Heart left ventricle (tissue), 16 donors: ENCODE measurements at regions of chr2 and their contacts with region 1.

Region 1: DNA sequence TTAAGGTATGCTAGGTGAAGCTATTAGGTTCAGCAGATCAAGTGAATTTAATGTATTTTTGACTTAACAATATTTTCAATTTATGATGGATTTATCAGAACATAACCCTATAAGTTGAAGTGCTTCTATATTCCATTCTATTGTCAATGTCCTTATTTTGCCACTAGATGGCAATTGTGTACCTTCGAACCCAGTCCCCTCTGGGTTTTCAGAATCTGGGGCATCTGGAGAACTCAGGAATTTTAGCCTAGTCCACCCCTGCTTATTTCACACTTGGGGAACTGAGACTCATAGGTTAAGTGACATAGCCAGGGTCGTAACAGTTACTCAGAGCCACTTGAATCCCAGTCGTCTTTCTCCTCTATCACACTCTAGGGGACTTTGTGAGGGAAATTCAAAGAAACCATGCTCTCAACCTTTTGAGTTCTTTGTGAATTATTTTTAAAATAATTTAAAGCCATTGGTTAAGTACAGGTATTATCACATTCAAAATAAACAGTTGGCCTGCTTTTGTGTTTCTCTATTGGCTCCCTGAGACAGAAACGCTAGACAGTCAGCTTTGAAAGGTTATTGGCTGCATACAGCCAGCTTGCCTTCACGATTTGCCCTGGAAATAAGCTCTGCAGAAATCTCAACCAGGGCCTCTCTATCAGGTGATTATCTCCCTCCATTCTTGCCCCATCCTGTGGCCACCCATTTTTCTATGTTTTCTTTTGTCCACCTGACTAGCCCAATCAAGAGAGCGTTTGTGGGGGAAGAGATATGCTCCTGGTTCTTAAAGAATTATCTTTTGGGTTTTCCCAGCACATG is 145.0 kb downstream of the TTC27 start:
- DNase-seq: peak in 1 of 5 donors; percentile 12
- ATAC-seq: peak; percentile 47 to 79 (median 67)
- H3K4me3 ChIP-seq: no peak overlapping the region
- H3K27ac ChIP-seq: peak overlapping the region in 6 of 12 donors; percentile 3 to 44 (median 22)
- H3K4me1 ChIP-seq: peaks cover 0 to 30% (median 8%) of the 10 kb centered on the region in 12 donors
- H3K27me3 ChIP-seq: no peaks in the 10 kb centered on the region
- CTCF ChIP-seq: peak; percentile 41 to 89 (median 80)
- POLR2A ChIP-seq: no peak

Region 2: DNA sequence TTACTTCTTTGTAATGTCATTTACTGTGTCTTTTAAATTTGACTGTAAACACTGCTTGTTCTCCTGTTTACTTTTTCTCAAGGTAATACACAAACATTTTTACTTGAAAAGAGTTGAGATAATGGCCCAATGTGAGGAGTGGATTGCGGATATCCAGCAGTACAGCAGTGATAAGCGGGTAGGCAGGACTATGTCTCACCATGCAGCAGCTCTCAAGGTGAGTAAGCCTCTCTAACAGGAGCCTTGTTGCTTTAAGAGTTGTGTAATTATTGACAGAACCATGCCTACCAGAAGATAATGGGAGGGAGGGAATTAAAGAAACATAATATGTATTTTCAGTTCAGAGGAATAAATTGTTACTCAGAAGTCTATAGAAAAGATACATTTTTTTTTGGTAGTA is 161.5 kb before region 1 on chr2:
- intact Hi-C with region 1: no loop called
- DNase-seq: no peak
- ATAC-seq: no peak
- H3K4me3 ChIP-seq: no peak overlapping the region
- H3K27ac ChIP-seq: no peak overlapping the region
- H3K4me1 ChIP-seq: no peaks in the 10 kb centered on the region
- H3K27me3 ChIP-seq: no peaks in the 10 kb centered on the region
- CTCF ChIP-seq: no peak
- POLR2A ChIP-seq: no peak

Region 3: GRCh38 chr2:33033606-33034081 is 260.8 kb after region 1 on chr2:
- intact Hi-C with region 1: loop called (anchors 1 to 5 kb)
- DNase-seq: no peak
- ATAC-seq: peak; percentile 53 to 83 (median 72)
- H3K4me3 ChIP-seq: peak overlapping the region in 8 of 12 donors; percentile 9 to 46 (median 35)
- H3K27ac ChIP-seq: peak overlapping the region in 2 of 12 donors; percentile 7 to 69
- H3K4me1 ChIP-seq: peaks cover 0 to 25% (median 5%) of the 10 kb centered on the region in 12 donors
- H3K27me3 ChIP-seq: no peaks in the 10 kb centered on the region
- CTCF ChIP-seq: peak; percentile 30 to 79 (median 68)
- POLR2A ChIP-seq: no peak

Region 4: DNA sequence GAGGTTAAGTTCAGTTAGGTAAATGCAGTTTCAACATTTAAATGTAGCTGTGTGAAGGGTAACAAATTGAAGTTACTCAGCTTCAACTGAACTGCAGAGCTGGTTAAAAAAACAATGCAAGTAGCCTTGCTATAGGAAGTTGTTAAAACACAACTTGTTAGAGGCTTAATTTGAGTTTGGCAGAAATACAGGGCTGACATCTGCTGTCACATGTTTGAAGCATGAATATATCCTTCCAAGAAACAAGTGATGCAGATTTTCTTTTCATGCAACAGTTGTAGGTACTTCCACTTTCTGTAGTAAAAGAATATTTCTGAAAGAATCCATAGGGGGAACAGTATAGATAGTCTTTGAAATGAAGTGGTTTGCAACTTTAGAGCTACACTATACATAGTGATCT is 494.9 kb after region 1 on chr2:
- intact Hi-C with region 1: loop called in 8 of 10 experiments (anchors 5 to 10 kb)
- DNase-seq: no peak
- ATAC-seq: no peak
- H3K4me3 ChIP-seq: no peak overlapping the region
- H3K27ac ChIP-seq: peak overlapping the region in 1 of 12 donors; percentile 48
- H3K4me1 ChIP-seq: peaks cover 0 to 24% (median 9%) of the 10 kb centered on the region in 12 donors
- H3K27me3 ChIP-seq: no peaks in the 10 kb centered on the region
- CTCF ChIP-seq: no peak
- POLR2A ChIP-seq: no peak

Region 5: GRCh38 chr2:33366473-33366872 is 593.6 kb after region 1 on chr2:
- intact Hi-C with region 1: loop called in 5 of 10 experiments (anchors 10 kb)
- DNase-seq: peak; percentile 41 to 68 (median 61)
- ATAC-seq: peak; percentile 87 to 96 (median 92)
- H3K4me3 ChIP-seq: no peak overlapping the region
- H3K27ac ChIP-seq: peak overlapping the region in 10 of 12 donors; percentile 14 to 66 (median 34)
- H3K4me1 ChIP-seq: peaks cover 0 to 17% (median 2%) of the 10 kb centered on the region in 12 donors
- H3K27me3 ChIP-seq: no peaks in the 10 kb centered on the region
- CTCF ChIP-seq: no peak
- POLR2A ChIP-seq: no peak

Region 6: GRCh38 chr2:33577668-33578067 is 804.8 kb after region 1 on chr2:
- intact Hi-C with region 1: loop called in 7 of 10 experiments (anchors 5 to 10 kb)
- DNase-seq: no peak
- ATAC-seq: no peak
- H3K4me3 ChIP-seq: no peak overlapping the region
- H3K27ac ChIP-seq: no peak overlapping the region
- H3K4me1 ChIP-seq: peaks cover 0 to 14% (median under 1%) of the 10 kb centered on the region in 12 donors
- H3K27me3 ChIP-seq: no peaks in the 10 kb centered on the region
- CTCF ChIP-seq: no peak
- POLR2A ChIP-seq: no peak